ENCODE measurements at regions of chr18 and their contacts with region 1.

Region 1: DNA sequence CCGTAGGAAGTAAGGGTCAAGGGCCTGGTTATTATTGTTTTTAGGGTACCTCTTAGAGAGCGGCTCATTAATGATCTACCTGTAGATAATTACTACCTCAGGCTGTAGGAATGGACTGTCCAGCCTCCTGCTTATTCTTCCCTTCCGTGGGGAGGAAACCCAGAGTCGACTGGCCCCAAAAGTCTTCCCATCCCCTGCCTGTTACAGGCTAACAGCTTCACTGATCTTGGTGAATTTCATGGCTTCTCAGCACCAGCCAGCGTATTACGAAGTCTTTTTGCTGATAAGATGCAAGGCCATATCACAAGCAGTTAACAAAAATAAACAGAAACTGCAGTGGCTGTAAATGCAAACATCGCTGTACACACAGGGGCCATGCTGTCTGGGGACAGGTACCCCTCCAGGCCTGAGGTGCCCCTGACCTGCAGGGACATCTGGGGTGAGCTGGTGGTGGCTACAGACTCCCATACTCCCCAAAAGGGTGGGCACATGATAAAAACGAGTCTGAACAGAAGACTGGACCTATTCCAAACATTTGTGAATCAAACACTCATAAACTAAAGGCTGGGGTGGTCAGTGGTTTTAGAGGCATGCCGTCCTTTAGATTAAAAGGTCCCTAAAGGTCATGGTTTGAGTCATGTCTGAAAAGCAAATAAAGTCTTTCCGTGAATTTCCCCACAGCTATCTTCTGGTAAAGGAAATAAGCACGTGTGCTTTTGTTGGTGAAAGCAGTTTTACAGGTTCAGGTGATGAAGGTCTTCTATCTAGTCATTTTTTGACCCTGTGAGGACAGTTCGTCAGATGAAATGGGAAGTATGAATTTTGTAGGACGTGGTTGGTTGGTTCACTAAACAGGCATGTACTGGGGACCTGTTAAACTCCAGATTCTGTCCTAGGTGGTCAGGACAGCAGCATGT is 36.7 kb downstream of the TTC39C start:
- DNase-seq: no peak
- H3K4me3 ChIP-seq: peak overlapping the region in 1 of 2 donors; percentile 1
- H3K4me3 Mint-ChIP-seq: peak overlapping the region in 7 of 8 donors; percentile 36 to 71 (median 54)
- H3K27ac ChIP-seq: peak overlapping the region; percentile 28
- H3K27ac Mint-ChIP-seq: peak overlapping the region; percentile 51 to 92 (median 80)
- H3K4me1 ChIP-seq: peaks cover 100% of the 10 kb centered on the region
- H3K4me1 Mint-ChIP-seq: peaks cover 63 to 95% (median 75%) of the 10 kb centered on the region in 4 donors
- H3K27me3 ChIP-seq: no peaks in the 10 kb centered on the region
- H3K27me3 Mint-ChIP-seq: no peaks in the 10 kb centered on the region

Region 2: DNA sequence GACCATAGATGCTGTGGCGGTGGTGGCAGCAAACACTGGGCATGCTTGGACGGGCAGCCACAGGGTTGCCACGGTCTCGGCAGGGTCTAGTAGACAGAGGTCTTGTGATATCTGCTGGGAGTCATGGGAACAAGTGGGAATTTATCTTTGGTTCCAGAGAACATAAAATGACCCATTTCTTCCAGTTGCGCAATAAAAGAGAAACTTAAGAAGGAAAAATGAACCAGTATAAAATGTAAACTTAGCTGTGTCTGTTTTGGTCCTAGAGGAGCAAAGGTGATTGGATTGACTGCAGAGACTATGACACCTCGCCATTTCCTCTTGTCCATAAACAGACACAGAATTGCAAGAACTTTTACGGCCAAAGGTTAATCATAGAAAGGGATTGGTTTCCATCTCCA is 1250.7 kb before region 1 on chr18:
- CTCF ChIA-PET with region 1: no interaction called
- POLR2A ChIA-PET with region 1: no interaction called
- intact Hi-C with region 1: no loop called
- DNase-seq: no peak
- H3K4me3 ChIP-seq: no peak overlapping the region
- H3K4me3 Mint-ChIP-seq: no peak overlapping the region
- H3K27ac ChIP-seq: no peak overlapping the region
- H3K27ac Mint-ChIP-seq: no peak overlapping the region
- H3K4me1 ChIP-seq: no peaks in the 10 kb centered on the region
- H3K4me1 Mint-ChIP-seq: no peaks in the 10 kb centered on the region
- H3K27me3 ChIP-seq: no peaks in the 10 kb centered on the region
- H3K27me3 Mint-ChIP-seq: peaks cover 2 to 4% of the 10 kb centered on the region in 2 donors

Region 3: GRCh38 chr18:24019641-24020331 is 31.5 kb before region 1 on chr18:
- CTCF ChIA-PET with region 1: interaction called, 4 read pairs
- POLR2A ChIA-PET with region 1: interaction called, 6 read pairs
- intact Hi-C with region 1: loop called (anchors 2 kb)
- DNase-seq: peak; percentile 73 to 82 (median 79)
- H3K4me3 ChIP-seq: peak overlapping the region in 1 of 2 donors; percentile 50
- H3K4me3 Mint-ChIP-seq: peak overlapping the region; percentile 78 to 100 (median 96)
- H3K27ac ChIP-seq: peak overlapping the region; percentile 75
- H3K27ac Mint-ChIP-seq: peak overlapping the region; percentile 85 to 99 (median 95)
- H3K4me1 ChIP-seq: peaks cover 83% of the 10 kb centered on the region
- H3K4me1 Mint-ChIP-seq: peaks cover 68 to 96% (median 79%) of the 10 kb centered on the region in 4 donors
- H3K27me3 ChIP-seq: no peaks in the 10 kb centered on the region
- H3K27me3 Mint-ChIP-seq: no peaks in the 10 kb centered on the region

Region 4: DNA sequence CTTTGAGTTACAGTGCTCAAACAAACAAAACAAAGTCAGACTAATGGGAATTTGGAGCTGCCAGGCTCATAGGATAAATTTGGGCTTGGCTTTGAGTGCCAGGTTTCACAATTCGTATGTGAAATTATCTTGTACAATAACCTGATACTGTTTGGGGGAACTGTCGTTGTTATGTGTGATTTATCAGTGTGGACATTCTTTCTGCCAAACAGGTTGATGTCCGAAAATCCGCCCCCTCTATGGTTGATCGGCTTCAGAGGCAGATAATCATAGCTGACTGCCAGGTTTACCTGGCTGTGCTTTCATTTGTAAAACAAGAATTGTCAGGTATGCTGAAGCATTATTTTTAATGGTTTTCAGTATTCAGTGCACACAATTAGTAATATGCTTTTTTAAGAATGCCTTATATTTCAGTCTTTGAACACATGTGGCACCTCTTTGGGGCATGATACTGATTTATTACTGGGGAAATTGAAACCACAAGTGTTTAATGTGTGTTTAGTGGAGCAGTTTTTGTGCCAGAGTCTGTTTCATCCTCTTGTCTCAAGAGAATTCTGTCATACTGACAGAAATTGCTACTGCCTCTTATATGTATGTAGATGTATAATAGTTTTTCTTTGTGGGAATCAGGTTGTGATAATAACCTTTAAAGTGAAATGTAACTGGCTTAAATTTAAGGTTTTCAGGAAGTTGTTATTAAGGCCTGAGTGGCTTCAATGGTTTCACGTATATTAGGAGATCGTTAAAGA is 17.8 kb after region 1 on chr18:
- CTCF ChIA-PET with region 1: interaction called, 3 read pairs
- POLR2A ChIA-PET with region 1: interaction called, 3 read pairs
- intact Hi-C with region 1: loop called (anchors 2 kb)
- DNase-seq: no peak
- H3K4me3 ChIP-seq: no peak overlapping the region
- H3K4me3 Mint-ChIP-seq: peak overlapping the region in 2 of 8 donors; percentile 1 to 3
- H3K27ac ChIP-seq: peak overlapping the region; percentile 8
- H3K27ac Mint-ChIP-seq: peak overlapping the region in 4 of 7 donors; percentile 25 to 71 (median 49)
- H3K4me1 ChIP-seq: peaks cover 55% of the 10 kb centered on the region
- H3K4me1 Mint-ChIP-seq: peaks cover 41 to 81% (median 61%) of the 10 kb centered on the region in 4 donors
- H3K27me3 ChIP-seq: no peaks in the 10 kb centered on the region
- H3K27me3 Mint-ChIP-seq: no peaks in the 10 kb centered on the region

Region 5: DNA sequence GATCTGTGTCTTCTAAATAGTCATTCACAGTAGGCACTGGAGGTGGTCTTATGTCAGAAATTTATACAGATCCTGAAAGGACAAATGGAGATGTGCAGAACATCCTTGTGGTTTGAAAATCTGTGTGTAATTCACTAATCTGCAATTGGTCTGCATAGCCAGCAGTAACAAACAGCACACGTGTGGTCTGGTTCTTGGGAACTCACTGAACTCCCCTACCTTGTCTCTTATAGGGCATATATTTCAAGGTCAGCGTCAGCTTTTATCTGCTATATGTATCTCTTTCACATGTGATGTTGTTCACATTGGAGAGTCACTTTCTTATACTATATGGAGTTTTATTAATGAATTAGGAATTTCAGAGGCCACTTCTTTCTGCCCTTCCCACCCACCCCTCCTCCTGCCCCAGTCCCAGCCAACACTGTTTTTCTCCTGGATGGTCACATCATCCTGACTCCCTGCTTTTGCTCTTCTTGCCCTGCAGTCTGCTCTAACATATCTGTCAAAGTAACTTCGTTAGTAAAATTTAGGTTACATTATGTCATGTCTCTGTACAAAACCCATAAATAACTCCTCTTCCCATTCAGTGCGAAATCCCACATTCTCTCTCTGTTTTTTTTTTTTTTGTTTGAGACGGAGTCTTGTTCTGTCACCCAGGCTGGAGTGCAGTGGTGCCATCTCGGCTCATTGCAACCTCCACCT is 52.2 kb after region 1 on chr18:
- CTCF ChIA-PET with region 1: no interaction called
- POLR2A ChIA-PET with region 1: no interaction called
- intact Hi-C with region 1: no loop called
- DNase-seq: no peak
- H3K4me3 ChIP-seq: no peak overlapping the region
- H3K4me3 Mint-ChIP-seq: no peak overlapping the region
- H3K27ac ChIP-seq: no peak overlapping the region
- H3K27ac Mint-ChIP-seq: peak overlapping the region in 6 of 7 donors; percentile 36 to 75 (median 54)
- H3K4me1 ChIP-seq: peaks cover 7% of the 10 kb centered on the region
- H3K4me1 Mint-ChIP-seq: peaks cover 35 to 58% (median 46%) of the 10 kb centered on the region in 4 donors
- H3K27me3 ChIP-seq: no peaks in the 10 kb centered on the region
- H3K27me3 Mint-ChIP-seq: no peaks in the 10 kb centered on the region

Region 6: DNA sequence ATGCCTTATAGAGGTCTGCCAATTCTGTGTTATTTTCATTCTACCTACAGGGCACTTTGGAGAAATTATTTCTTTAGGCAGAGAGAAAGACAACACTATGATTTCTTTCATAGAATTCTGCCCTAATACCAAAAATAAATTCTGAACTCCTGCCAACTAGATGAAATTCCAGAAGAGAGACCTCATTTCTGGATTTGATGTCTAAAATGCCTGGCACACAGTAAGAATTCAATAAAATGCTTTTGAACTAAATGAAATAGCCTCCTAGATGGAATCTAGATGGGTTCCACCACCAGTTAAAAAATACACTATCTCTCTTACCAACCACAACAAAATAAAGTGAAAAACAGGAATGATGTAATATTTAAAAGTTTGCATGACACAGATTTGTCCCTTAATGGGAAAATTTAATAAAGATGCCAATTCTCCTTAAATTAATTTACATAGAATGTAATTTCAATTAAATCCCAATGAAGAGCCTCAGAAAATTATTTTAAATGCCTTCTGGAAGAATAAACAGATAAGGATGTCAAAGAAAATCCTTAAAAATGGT is 271.4 kb after region 1 on chr18:
- CTCF ChIA-PET with region 1: no interaction called
- POLR2A ChIA-PET with region 1: no interaction called
- intact Hi-C with region 1: no loop called
- DNase-seq: no peak
- H3K4me3 ChIP-seq: no peak overlapping the region
- H3K4me3 Mint-ChIP-seq: no peak overlapping the region
- H3K27ac ChIP-seq: no peak overlapping the region
- H3K27ac Mint-ChIP-seq: no peak overlapping the region
- H3K4me1 ChIP-seq: no peaks in the 10 kb centered on the region
- H3K4me1 Mint-ChIP-seq: no peaks in the 10 kb centered on the region
- H3K27me3 ChIP-seq: no peaks in the 10 kb centered on the region
- H3K27me3 Mint-ChIP-seq: no peaks in the 10 kb centered on the region